Colonic mucosa (tissue), 4 donors: ENCODE measurements at regions of chr10 and their contacts with region 1.

Region 1: DNA sequence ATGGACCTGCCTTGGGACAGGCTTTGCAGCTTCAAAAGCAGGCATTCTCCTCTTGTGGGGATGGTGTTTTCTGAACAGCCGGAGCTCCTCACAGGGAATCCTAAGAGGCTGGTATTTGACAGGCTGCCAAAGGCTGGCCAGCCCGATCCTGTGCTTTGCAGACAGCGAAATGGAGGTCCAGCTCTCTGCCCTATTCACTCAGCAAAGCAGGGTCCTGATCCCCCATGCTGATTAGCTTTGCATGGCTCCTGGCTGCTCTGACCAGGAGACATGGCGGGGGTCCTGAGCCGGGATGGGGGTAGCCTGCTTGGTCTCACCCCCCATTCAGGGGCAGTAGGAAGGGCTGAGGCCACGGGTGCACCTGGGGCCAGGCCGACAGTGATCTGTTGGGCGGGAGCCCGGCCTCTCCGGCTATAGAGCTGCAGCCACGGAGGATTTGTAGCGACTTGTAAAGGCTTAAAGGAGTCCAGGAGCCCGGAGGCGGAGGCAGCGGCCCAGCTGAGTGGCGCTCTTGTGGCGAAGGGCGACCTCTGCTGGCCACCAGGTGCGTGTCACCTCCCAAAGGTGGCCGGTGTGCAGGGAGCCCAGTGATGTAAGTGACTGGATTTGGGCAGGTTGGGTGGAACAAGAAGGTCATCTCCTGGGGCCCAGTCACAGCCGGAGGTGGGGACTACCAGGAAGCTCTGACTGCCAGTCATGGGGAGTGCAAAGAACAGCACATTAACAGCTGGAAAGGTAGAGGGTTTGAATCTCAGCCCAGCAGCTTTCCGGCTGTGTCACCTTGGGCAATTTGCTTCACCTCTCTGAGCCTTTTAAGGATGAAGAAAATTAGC is 126.5 kb downstream of the ZMIZ1 start:
- DNase-seq: peak; percentile 84
- H3K4me3 ChIP-seq: no peak overlapping the region
- H3K27ac ChIP-seq: peak overlapping the region; percentile 25
- H3K4me1 ChIP-seq: peaks cover 4% of the 10 kb centered on the region
- H3K27me3 ChIP-seq: no peaks in the 10 kb centered on the region
- CTCF ChIP-seq: peak; percentile 95

Region 2: GRCh38 chr10:78047314-78047891 is 1147.9 kb before region 1 on chr10:
- intact Hi-C with region 1: loop called (anchors 5 kb)
- DNase-seq: peak; percentile 91
- H3K4me3 ChIP-seq: no peak overlapping the region
- H3K27ac ChIP-seq: no peak overlapping the region
- H3K4me1 ChIP-seq: no peaks in the 10 kb centered on the region
- H3K27me3 ChIP-seq: no peaks in the 10 kb centered on the region
- CTCF ChIP-seq: peak; percentile 87

Region 3: DNA sequence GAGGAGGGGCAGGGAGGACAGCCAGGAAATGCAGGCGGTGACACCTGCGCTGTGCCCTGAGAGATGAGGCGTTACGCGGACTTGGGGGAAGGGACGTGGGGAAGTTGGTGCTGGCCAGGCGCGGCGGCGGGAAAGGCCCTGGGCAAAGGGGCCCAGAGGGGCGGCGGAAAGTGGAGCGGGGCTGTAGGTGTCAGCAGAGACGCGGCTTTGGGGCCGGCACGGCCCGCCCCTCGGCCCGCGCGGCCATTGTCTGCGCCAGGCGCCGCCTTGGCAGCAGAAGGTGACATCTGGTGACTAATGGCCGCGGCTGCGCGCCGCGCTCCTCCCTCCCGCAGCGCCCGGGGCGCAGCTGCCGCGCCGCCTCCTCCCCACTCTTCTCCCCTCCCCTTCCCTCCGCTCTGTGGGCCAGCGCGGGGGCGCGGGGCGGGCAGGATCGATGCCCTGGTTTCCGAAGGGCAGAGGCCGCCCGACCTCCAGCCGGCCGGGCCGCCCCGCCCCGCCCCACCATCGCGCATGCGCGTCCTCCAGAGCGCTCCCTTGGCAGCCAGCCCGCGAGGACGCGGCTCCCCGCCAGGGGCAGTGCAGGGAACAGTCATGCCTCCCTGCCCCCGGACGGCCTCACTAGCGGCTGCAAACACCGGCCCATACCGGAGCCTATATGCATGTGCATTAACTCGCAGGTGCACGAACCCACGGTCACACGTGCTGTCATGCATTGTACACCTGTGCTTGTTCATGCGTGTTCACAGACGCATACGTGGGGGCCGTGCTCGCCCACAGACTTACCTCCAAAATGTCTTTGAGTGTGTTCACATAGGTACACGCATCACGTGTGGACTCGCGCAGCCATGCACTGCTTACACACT is 892.1 kb before region 1 on chr10:
- intact Hi-C with region 1: loop called (anchors 10 kb)
- DNase-seq: peak; percentile 95
- H3K4me3 ChIP-seq: peak overlapping the region; percentile 46
- H3K27ac ChIP-seq: peak overlapping the region; percentile 85
- H3K4me1 ChIP-seq: no peaks in the 10 kb centered on the region
- H3K27me3 ChIP-seq: no peaks in the 10 kb centered on the region
- CTCF ChIP-seq: peak; percentile 79

Region 4: GRCh38 chr10:78657163-78657861 is 538.0 kb before region 1 on chr10:
- intact Hi-C with region 1: loop called (anchors 5 kb)
- DNase-seq: peak; percentile 89
- H3K4me3 ChIP-seq: no peak overlapping the region
- H3K27ac ChIP-seq: no peak overlapping the region
- H3K4me1 ChIP-seq: no peaks in the 10 kb centered on the region
- H3K27me3 ChIP-seq: no peaks in the 10 kb centered on the region
- CTCF ChIP-seq: peak; percentile 60

Region 5: DNA sequence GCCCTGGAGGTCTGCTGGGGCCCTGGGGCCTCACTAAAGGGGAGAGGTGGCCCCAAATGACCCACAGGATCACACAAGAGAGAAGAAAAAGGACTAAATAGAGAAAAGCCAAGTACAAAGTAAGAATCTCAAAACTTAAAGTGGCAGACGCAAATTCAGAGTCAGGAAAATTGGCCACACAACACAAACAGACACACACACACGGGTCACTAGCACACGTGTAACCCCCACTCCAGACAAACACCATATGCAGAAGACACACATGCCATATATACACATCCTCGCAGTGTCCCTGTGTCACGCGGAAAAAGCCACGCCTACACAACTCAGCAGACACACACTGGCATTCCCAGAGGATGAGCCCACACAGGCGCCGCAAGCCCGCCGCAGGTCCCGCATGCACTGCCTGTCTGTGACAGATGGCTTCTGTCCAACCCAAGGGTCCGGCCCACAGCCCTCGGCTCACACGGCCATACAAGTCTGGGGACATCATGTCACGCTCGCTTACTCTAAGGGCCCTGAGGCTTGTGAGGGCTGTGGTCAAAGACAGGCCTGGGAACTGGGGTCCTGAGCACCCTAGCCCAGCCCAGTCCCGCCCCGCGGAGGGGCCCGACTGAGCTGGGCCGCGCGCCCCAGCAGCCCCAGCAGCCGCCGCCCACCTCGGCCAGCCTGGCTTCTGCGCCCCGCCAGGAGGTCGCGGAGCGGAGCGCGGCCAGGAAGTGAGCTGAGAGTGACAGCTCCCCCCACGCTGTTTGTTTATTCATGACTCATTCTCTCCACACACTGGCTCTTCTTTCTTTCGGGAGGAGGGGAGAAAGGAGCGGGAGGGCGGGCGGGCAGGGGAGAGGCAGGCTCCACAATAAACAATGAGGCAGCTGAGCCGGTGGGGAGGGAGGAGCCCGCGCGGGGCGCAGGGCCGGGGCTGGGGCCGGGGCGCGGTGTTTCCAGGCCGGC is 222.1 kb before region 1 on chr10:
- intact Hi-C with region 1: loop called (anchors 10 kb)
- DNase-seq: peak; percentile 66
- H3K4me3 ChIP-seq: peak overlapping the region; percentile 42
- H3K27ac ChIP-seq: peak overlapping the region; percentile 83
- H3K4me1 ChIP-seq: peaks cover 5% of the 10 kb centered on the region
- H3K27me3 ChIP-seq: no peaks in the 10 kb centered on the region
- CTCF ChIP-seq: no peak

Region 6: GRCh38 chr10:79047875-79048638 is 147.2 kb before region 1 on chr10:
- intact Hi-C with region 1: no loop called
- DNase-seq: peak; percentile 69
- H3K4me3 ChIP-seq: no peak overlapping the region
- H3K27ac ChIP-seq: peak overlapping the region; percentile 50
- H3K4me1 ChIP-seq: peaks cover 23% of the 10 kb centered on the region
- H3K27me3 ChIP-seq: no peaks in the 10 kb centered on the region
- CTCF ChIP-seq: no peak